ENCODE measurements at regions of chr7 and their contacts with region 1.

Region 1: DNA sequence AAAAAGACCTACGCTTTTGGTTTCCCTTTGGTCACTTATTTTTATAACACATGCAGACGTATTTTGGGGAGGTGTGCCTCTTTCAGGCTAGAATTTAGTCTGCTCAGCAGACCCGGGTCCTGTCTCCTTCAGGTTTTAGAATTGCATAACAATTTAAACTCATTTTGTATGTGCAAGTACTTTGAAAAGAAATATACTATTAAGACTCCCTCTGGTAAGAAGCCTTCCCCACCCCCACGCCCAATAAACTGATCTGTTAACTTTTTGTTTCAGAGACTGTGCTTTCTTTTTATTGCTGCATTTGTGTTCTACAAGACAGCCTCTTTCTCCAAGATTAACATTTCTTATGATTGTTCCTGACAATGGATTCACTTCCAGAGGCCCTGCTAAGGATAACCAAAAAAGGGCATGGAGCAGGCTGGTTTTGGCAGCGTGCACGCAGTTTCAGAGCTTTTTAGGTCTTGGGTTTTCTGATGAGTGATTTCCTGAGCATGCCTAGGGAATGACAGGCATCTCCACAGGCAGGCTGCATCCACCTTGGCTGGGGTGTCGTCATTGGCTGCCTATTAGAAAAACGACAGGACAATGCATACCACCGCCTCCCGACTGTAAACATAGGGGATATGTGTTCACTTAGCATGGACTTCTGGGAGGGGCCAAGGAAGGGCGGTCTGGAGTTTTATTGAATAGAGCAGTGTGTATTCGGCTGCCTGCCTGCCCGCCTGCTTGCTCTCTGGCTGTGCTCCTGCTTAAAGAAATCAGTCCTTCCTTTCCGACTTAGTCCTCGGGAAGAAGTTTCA is at the start of gene CALD1:
- DNase-seq: peak; percentile 67
- H3K4me3 ChIP-seq: peak within 1 kb of the TSS; percentile 12 to 58 (median 40)
- H3K27ac ChIP-seq: peak within 1 kb of the TSS; percentile 84 to 91 (median 87)
- H3K4me1 ChIP-seq: peaks cover 0 to 19% (median 8%) of the 10 kb centered on the region in 4 donors
- H3K27me3 ChIP-seq: no peaks in the 10 kb centered on the region
- CTCF ChIP-seq: no peak
- EP300 ChIP-seq: peak; percentile 75
- POLR2A ChIP-seq: peak; percentile 76
- total RNA-seq, gene CALD1: 162 to 401 (median 226) TPM

Region 2: GRCh38 chr7:133315332-133316040 is 1463.7 kb before region 1 on chr7:
- in situ Hi-C with region 1: no loop called
- intact Hi-C with region 1: no loop called
- DNase-seq: no peak
- H3K4me3 ChIP-seq: no peak overlapping the region
- H3K27ac ChIP-seq: no peak overlapping the region
- H3K4me1 ChIP-seq: no peaks in the 10 kb centered on the region
- H3K27me3 ChIP-seq: no peaks in the 10 kb centered on the region
- CTCF ChIP-seq: no peak
- EP300 ChIP-seq: no peak
- POLR2A ChIP-seq: no peak

Region 3: DNA sequence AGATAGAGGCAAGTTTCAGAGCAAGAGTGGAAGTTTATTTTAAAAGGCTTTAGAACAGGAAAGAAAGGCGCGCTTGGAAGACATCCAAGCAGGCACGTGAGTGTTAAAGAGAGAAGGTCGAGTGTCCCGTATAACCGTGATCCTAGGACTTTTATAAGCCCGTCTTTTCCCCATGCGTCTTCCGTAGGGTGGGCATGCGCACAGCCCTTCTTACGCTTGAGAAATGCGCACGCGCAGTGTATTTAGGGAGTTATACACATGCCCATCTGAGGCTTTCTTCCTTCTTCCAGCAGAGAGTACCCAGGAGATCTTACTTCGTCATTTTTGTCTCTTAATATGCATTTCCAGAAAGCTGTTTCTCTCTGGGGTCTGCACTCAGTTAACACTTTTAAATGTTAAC is 52.7 kb after region 1 on chr7:
- in situ Hi-C with region 1: no loop called
- intact Hi-C with region 1: loop called (anchors 1 kb)
- DNase-seq: peak; percentile 37
- H3K4me3 ChIP-seq: no peak overlapping the region
- H3K27ac ChIP-seq: peak overlapping the region; percentile 73 to 85 (median 82)
- H3K4me1 ChIP-seq: peaks cover 10 to 54% (median 16%) of the 10 kb centered on the region in 4 donors
- H3K27me3 ChIP-seq: no peaks in the 10 kb centered on the region
- CTCF ChIP-seq: no peak
- EP300 ChIP-seq: no peak
- POLR2A ChIP-seq: no peak

Region 4: GRCh38 chr7:134954197-134955082 is 175.3 kb after region 1 on chr7:
- in situ Hi-C with region 1: no loop called
- intact Hi-C with region 1: loop called (anchors 10 kb)
- DNase-seq: no peak
- H3K4me3 ChIP-seq: no peak overlapping the region
- H3K27ac ChIP-seq: no peak overlapping the region
- H3K4me1 ChIP-seq: no peaks in the 10 kb centered on the region
- H3K27me3 ChIP-seq: no peaks in the 10 kb centered on the region
- CTCF ChIP-seq: peak; percentile 39 to 55 (median 53)
- EP300 ChIP-seq: no peak
- POLR2A ChIP-seq: no peak